PC-3 (cell line): ENCODE measurements at regions of chr4 and their contacts with region 1.

Region 1: GRCh38 chr4:10690185-10690907 is 5.8 kb upstream of the CLNK start:
- DNase-seq: no peak
- ATAC-seq: no peak
- H3K4me3 ChIP-seq: no peak overlapping the region
- H3K27ac ChIP-seq: no peak overlapping the region
- H3K4me1 ChIP-seq: peaks cover 20% of the 10 kb centered on the region
- H3K27me3 ChIP-seq: no peaks in the 10 kb centered on the region
- CTCF ChIP-seq: no peak

Region 2: DNA sequence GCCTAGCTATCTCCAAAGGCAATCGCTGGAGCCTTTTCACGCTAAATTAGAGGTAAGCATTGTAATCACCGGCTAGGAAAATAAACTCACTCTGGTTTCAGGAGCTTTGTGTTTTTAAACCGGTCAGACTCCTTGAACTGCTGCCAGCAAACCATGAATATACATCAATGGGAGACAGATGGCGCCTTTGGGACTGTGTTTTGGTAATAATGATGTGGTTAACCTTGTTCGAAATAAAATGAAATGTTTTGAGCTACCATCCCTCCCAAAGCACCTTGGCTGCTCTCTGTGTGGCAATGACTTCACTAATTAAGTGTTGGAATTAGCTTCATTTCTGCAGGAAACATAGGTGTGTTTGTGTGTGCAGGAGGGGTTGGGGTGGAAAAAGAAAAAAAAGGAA is 71.1 kb before region 1 on chr4:
- CTCF ChIA-PET with region 1: no interaction called
- POLR2A ChIA-PET with region 1: no interaction called
- intact Hi-C with region 1: loop called (anchors 10 kb)
- DNase-seq: peak; percentile 39
- ATAC-seq: no peak
- H3K4me3 ChIP-seq: no peak overlapping the region
- H3K27ac ChIP-seq: no peak overlapping the region
- H3K4me1 ChIP-seq: peaks cover 9% of the 10 kb centered on the region; the same call in 1 of the 2 replicates
- H3K27me3 ChIP-seq: no peaks in the 10 kb centered on the region
- CTCF ChIP-seq: no peak; the same call in 1 of the 2 replicates

Region 3: GRCh38 chr4:10655986-10656385 is 34.4 kb before region 1 on chr4:
- CTCF ChIA-PET with region 1: no interaction called
- POLR2A ChIA-PET with region 1: no interaction called
- intact Hi-C with region 1: loop called (anchors 5 kb)
- DNase-seq: peak; percentile 71
- ATAC-seq: peak; percentile 64
- H3K4me3 ChIP-seq: peak overlapping the region; percentile 57
- H3K27ac ChIP-seq: peak overlapping the region; percentile 79
- H3K4me1 ChIP-seq: peaks cover 28% of the 10 kb centered on the region
- H3K27me3 ChIP-seq: no peaks in the 10 kb centered on the region
- CTCF ChIP-seq: no peak